ENCODE measurements at regions of chr3 and their contacts with region 1.

Region 1: DNA sequence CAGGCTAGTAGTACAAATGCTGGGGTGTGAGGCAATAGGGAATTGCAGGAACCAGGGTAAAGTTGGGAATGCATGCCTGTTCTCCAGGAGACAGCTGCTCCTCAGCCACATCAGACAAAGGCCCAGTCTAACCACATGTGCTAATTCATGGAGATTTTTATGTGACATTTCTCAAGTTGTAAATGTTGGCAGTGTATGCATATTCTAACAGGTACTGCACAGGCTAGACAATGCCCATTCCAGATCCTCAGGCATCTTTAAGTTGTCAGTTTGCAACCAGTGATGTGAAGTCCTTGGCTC is 84.8 kb downstream of the EEFSEC start:
- DNase-seq: no peak
- H3K4me3 Mint-ChIP-seq: no peak overlapping the region
- H3K27ac Mint-ChIP-seq: no peak overlapping the region
- H3K4me1 Mint-ChIP-seq: no peaks in the 10 kb centered on the region
- H3K27me3 Mint-ChIP-seq: no peaks in the 10 kb centered on the region
- CTCF ChIP-seq: no peak

Region 2: GRCh38 chr3:128263946-128264685 is 26.0 kb after region 1 on chr3:
- CTCF ChIA-PET with region 1: no interaction called
- intact Hi-C with region 1: loop called (anchors 1 kb)
- DNase-seq: no peak
- H3K4me3 Mint-ChIP-seq: no peak overlapping the region
- H3K27ac Mint-ChIP-seq: no peak overlapping the region
- H3K4me1 Mint-ChIP-seq: peaks cover 15% of the 10 kb centered on the region
- H3K27me3 Mint-ChIP-seq: no peaks in the 10 kb centered on the region
- CTCF ChIP-seq: no peak

Measured in Calu3 (cell line).